Sigmoid colon (tissue), 7 donors: ENCODE measurements at regions of chr5 and their contacts with region 1.

Region 1: DNA sequence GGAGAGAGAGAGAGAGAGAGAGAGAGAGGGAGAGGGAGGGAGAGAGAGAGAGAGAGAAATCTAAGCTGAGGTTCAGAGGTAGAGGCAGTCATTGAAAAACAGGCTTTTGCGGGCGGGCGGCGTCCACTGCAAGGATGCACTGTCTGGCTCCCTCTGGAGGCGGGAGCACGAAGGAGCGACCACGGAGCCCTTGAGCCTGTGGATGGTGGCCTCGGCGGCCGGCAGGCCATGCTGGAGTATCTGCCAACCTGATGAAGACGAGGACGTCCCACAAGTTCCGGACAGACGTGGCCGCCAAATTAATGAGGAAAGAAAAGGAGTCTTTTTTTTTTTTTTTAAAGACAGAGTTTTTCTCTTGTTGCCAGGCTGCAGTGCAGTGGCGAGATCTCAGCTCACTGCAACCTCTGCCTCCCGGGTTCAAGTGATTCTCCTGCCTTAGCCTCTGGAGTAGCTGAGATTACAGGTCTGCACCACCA is 2.2 kb upstream of the CCDC125 start:
- DNase-seq: peak; percentile 92
- H3K4me3 ChIP-seq: peak overlapping the region in 2 of 4 donors; percentile 4 to 7
- H3K27ac ChIP-seq: peak overlapping the region in 3 of 4 donors; percentile 39 to 49 (median 45)
- H3K4me1 ChIP-seq: peaks cover 0 to 23% (median 10%) of the 10 kb centered on the region in 4 donors
- H3K27me3 ChIP-seq: no peaks in the 10 kb centered on the region
- CTCF ChIP-seq: peak; percentile 37 to 80 (median 65)
- EP300 ChIP-seq: no peak
- POLR2A ChIP-seq: no peak

Region 2: GRCh38 chr5:69042915-69043658 is 291.7 kb before region 1 on chr5:
- intact Hi-C with region 1: loop called (anchors 2 kb)
- DNase-seq: peak; percentile 87
- H3K4me3 ChIP-seq: peak overlapping the region; percentile 28 to 52 (median 46)
- H3K27ac ChIP-seq: peak overlapping the region; percentile 59 to 78 (median 71)
- H3K4me1 ChIP-seq: peaks cover 0 to 8% (median 2%) of the 10 kb centered on the region in 4 donors
- H3K27me3 ChIP-seq: no peaks in the 10 kb centered on the region
- CTCF ChIP-seq: peak; percentile 57 to 85 (median 76)
- EP300 ChIP-seq: no peak
- POLR2A ChIP-seq: no peak

Region 3: DNA sequence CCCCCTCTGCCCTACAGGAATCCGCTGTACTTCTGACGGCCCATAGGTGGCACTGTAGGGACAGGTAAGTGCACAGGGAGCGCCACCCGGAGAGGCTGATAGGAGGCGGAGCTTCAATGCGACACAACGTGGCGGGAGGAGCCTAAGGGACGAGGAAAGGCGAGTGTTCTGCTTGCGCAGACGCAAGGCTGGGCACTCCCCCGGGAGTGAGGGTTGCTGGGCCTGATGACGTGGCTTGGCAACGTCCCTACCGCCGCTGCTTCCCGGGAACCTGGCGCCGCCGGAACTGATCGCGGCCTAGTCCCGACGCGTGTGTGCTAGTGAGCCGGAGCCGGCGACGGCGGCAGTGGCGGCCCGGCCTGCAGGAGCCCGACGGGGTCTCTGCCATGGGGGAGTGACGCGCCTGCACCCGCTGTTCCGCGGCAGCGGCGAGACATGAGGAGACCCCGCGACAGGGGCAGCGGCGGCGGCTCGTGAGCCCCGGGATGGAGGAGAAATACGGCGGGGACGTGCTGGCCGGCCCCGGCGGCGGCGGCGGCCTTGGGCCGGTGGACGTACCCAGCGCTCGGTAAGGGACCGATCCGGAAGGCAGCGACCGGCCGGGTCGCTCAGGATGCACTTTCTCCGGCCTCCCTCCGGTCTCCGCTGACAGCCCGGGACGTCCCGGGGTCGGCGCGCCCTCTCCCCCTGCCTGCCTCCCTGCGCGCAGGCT is 240.9 kb before region 1 on chr5 and contains the start of gene SLC30A5:
- intact Hi-C with region 1: loop called (anchors 1 kb)
- DNase-seq: peak; percentile 100
- H3K4me3 ChIP-seq: peak within 1 kb of the TSS; percentile 81 to 96 (median 88)
- H3K27ac ChIP-seq: peak within 1 kb of the TSS; percentile 90 to 98 (median 96)
- H3K4me1 ChIP-seq: peaks cover 0 to 26% (median 17%) of the 10 kb centered on the region in 4 donors
- H3K27me3 ChIP-seq: no peaks in the 10 kb centered on the region
- CTCF ChIP-seq: peak; percentile 82 to 93 (median 90)
- EP300 ChIP-seq: no peak
- POLR2A ChIP-seq: peak in 1 of 2 donors; percentile 75
- total RNA-seq, gene SLC30A5: 37.2 to 56.4 (median 44.4) TPM

Region 4: DNA sequence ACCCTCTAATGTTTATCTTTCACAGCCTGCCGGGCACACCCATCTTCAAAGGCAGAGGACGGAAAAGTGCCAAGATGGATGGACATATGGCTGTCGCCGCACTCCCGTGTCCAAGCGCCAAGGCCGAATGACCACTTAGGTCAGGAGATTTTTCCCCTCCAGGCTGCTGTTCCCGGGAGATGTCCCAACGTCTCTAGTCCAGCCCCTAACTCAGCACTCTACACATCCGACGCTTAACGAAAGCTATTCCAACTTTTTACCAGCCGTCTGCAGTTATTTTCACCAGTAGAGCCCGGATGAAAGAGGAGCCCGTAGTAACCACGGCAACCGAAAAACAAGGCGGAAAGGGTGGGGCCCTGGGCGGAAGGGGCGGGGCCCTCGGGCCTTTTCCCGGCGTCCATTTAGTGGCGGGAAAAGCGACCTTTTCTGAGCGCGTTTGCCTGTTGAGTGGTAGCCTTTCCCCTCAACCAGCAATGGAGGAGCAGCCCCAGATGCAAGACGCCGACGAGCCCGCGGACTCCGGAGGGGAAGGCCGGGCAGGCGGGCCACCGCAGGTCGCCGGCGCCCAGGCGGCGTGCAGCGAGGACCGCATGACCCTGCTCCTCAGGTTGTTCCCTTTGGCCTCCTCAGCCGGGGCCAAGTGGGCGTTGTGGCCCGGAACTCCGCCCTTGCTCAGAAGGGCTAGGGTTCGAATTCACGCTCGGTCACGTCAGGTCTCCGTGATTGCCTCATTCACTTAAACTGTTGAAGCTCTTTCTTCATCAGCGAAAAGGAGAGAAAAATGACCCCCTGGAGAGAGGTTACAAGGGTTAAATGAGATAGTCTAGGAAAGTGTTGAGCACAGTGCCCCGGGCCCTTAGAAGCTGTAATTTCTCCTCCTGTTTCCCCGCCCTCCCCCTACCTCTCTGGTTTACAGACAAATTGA is 145.4 kb before region 1 on chr5 and contains the start of gene CENPH:
- intact Hi-C with region 1: loop called (anchors 10 kb)
- DNase-seq: peak; percentile 93
- H3K4me3 ChIP-seq: peak within 1 kb of the TSS; percentile 60 to 80 (median 70)
- H3K27ac ChIP-seq: peak within 1 kb of the TSS; percentile 56 to 79 (median 76)
- H3K4me1 ChIP-seq: peaks cover 0 to 17% (median 15%) of the 10 kb centered on the region in 4 donors
- H3K27me3 ChIP-seq: no peaks in the 10 kb centered on the region
- CTCF ChIP-seq: no peak
- EP300 ChIP-seq: no peak
- POLR2A ChIP-seq: no peak
- total RNA-seq, gene CENPH: 1.3 to 3.8 (median 2.6) TPM

Region 5: DNA sequence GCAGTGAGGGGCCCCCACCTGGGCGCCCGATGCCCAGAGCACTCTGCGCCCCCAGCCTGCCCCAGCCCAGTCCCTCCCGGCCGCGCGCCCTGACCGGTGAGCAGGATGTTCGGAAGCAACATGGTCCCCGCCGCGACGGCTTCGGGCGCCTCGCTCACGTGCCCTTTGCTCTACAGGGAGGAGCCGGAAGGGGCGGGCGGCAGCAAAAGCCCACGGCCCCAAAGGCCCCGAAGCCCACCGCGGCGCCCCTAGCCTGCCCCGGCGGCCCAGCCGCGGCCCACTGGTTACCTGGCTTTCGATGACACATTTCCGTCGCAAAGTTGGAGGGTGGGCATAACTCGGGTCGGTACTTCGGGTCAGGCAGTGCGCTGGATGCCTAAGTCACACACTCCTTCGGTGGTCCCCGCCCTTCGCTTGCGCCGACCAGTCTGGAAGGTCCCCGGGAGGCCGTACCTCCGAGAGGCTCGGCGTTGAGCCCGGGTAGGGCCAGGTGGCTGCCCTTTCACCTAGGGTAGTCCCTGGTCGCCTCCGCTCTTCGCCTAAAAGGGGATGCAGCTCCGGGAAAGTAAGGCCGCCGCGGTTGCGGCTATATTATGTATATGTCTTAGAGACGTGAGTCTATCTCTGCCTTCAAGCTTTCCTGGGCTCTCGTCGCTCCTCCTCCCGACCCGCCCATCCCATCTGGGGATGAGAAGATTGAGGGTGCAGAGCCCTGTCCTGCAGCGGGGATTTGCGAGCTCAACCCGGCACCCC is 34.7 kb after region 1 on chr5 and contains the starts of genes AK6, RAD17 and TAF9:
- intact Hi-C with region 1: loop called (anchors 5 kb)
- DNase-seq: peak; percentile 94
- H3K4me3 ChIP-seq: peak within 1 kb of the TSS; percentile 67 to 87 (median 78)
- H3K27ac ChIP-seq: peak within 1 kb of the TSS; percentile 93 to 96 (median 94)
- H3K4me1 ChIP-seq: peaks cover 0 to 35% (median 22%) of the 10 kb centered on the region in 4 donors
- H3K27me3 ChIP-seq: no peaks in the 10 kb centered on the region
- CTCF ChIP-seq: no peak
- EP300 ChIP-seq: no peak
- POLR2A ChIP-seq: peak; percentile 41 to 66
- total RNA-seq, gene AK6: 20.7 to 34.1 (median 28.5) TPM
- total RNA-seq, gene RAD17: 18.3 to 25.3 (median 19.5) TPM
- total RNA-seq, gene TAF9: 33.2 to 52.8 (median 38.6) TPM

Region 6: DNA sequence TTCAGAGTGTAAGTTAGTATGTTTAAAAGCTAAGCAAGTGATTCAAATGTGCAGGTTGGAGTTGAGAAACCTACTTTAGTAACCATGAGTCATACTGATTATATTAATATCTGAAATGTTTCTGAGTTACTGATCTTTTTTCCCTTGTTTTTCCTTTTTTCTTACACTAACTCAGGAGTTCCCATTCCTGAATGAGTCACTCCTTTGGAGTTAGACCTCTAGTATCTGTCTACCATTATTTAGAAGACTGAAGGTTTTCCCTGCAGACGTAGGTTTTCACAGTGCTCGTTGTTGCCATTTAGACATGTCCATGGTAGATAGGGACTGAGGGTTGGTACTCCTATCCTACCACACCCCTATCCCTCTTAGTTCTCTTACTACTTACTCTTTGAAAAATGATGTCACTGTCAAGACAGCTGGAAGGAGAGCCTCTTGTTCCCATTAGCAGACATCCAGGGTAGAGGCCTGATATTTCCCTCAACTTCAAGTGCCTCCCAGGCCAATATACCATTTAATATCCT is 178.0 kb after region 1 on chr5:
- intact Hi-C with region 1: no loop called
- DNase-seq: no peak
- H3K4me3 ChIP-seq: no peak overlapping the region
- H3K27ac ChIP-seq: no peak overlapping the region
- H3K4me1 ChIP-seq: no peaks in the 10 kb centered on the region
- H3K27me3 ChIP-seq: no peaks in the 10 kb centered on the region
- CTCF ChIP-seq: no peak
- EP300 ChIP-seq: no peak
- POLR2A ChIP-seq: no peak